ENCODE measurements at regions of chr4 and their contacts with region 1.

Region 1: GRCh38 chr4:187940299-187940698 is 55.3 kb upstream of the ZFP42 start:
- DNase-seq: no peak

Region 2: DNA sequence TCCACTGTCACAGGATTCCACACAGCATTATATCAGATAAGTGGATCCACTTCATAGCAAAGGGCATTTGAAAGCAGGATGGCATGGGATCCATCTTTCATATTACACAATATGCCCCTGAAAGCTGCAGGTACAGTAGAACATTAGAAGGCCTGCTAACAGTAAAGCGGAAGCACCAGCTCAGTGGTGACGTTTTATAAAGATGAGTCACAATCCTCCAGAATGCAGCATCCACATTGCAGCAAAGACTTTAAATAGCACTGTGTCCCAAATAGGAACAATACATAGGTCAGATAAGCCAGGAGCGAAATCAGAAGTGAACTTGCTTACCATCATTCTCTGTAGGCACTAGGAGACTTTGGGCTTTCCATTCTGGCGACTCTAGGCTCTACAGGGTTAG is 607.1 kb before region 1 on chr4:
- intact Hi-C with region 1: loop called in 1 of 2 experiments (anchors 10 kb)
- DNase-seq: no peak

Region 3: GRCh38 chr4:188242041-188242440 is 301.7 kb after region 1 on chr4:
- intact Hi-C with region 1: no loop called
- DNase-seq: no peak